ENCODE measurements at regions of chr19 and their contacts with region 1.

Region 1: GRCh38 chr19:39328046-39328705 is 7.5 kb upstream of the LRFN1 start:
- DNase-seq: peak; percentile 95
- ATAC-seq: peak; percentile 65
- H3K4me3 Mint-ChIP-seq: no peak overlapping the region
- H3K27ac Mint-ChIP-seq: no peak overlapping the region
- H3K4me1 Mint-ChIP-seq: peaks cover 11% of the 10 kb centered on the region
- H3K27me3 Mint-ChIP-seq: peaks cover 25% of the 10 kb centered on the region
- CTCF ChIP-seq: peak; percentile 99

Region 2: DNA sequence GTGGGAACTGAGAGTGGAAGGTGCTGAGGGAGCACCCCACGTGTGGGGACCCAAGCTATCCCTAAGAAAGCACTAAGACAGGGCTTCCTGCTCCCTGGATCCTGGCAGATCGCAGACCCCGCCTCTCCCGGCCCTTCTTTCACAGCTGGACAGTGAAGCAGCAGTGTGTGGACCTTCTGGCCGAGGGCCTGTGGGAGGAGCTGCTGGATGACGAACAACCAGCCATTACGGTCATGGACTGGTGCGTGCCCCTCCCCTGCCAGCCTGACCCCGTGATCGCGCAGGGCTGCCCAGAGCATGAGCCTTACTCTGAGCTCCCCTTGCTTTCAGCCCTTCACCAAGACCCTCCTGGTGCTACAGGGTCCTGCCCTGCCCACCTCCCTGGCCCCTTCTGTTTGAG is 129.2 kb before region 1 on chr19:
- CTCF ChIA-PET with region 1: interaction called, 12 read pairs
- POLR2A ChIA-PET with region 1: no interaction called
- DNase-seq: peak; percentile 42
- ATAC-seq: no peak
- H3K4me3 Mint-ChIP-seq: no peak overlapping the region
- H3K27ac Mint-ChIP-seq: no peak overlapping the region
- H3K4me1 Mint-ChIP-seq: peaks cover 22% of the 10 kb centered on the region
- H3K27me3 Mint-ChIP-seq: peaks cover 73% of the 10 kb centered on the region
- CTCF ChIP-seq: no peak

Region 3: DNA sequence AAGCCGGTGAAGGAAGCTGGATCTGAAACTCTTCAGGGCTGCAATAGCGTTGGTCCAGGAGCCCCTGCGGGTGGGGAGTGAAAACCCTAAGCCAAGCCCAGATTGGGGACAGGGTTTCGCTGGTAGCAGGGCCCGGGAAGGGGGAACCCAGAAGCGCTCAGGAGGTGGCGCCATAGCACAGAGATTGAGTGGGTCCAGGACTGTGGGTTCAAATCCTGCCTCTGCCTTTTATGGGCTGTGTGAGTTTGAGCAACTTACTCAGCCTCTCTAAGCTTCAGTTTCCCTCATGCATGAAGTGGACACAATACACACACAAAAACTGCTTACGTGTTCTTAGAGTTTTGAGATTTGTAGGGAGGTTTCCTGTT is 115.8 kb before region 1 on chr19:
- CTCF ChIA-PET with region 1: interaction called, 11 read pairs
- POLR2A ChIA-PET with region 1: no interaction called
- DNase-seq: peak; percentile 81
- ATAC-seq: peak; percentile 96
- H3K4me3 Mint-ChIP-seq: no peak overlapping the region
- H3K27ac Mint-ChIP-seq: no peak overlapping the region
- H3K4me1 Mint-ChIP-seq: no peaks in the 10 kb centered on the region
- H3K27me3 Mint-ChIP-seq: peaks cover 11% of the 10 kb centered on the region
- CTCF ChIP-seq: peak; percentile 18; the same call in 1 of the 2 replicates

Region 4: DNA sequence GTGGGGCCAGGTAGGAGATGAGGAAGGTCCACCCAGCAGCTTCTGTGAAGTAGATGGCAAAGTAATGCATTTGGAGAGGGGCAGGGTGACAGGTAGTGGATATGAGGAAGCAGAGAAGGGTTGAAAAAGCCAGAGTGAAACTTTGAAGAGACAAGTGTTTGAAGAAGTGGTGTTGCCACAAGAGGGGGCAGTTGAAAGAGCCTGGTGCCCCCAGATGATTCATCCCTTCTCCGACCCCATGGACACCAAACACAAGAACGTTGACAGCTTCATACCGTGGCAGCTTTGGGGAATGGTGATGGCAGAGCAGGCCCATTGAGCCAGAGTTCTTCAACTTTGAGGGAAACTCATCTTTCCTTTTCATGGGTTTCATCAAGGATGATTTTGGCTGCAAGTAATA is 103.3 kb before region 1 on chr19:
- CTCF ChIA-PET with region 1: interaction called, 10 read pairs
- POLR2A ChIA-PET with region 1: no interaction called
- DNase-seq: peak; percentile 26
- ATAC-seq: peak; percentile 39
- H3K4me3 Mint-ChIP-seq: no peak overlapping the region
- H3K27ac Mint-ChIP-seq: no peak overlapping the region
- H3K4me1 Mint-ChIP-seq: no peaks in the 10 kb centered on the region
- H3K27me3 Mint-ChIP-seq: peaks cover 41% of the 10 kb centered on the region
- CTCF ChIP-seq: no peak

Region 5: DNA sequence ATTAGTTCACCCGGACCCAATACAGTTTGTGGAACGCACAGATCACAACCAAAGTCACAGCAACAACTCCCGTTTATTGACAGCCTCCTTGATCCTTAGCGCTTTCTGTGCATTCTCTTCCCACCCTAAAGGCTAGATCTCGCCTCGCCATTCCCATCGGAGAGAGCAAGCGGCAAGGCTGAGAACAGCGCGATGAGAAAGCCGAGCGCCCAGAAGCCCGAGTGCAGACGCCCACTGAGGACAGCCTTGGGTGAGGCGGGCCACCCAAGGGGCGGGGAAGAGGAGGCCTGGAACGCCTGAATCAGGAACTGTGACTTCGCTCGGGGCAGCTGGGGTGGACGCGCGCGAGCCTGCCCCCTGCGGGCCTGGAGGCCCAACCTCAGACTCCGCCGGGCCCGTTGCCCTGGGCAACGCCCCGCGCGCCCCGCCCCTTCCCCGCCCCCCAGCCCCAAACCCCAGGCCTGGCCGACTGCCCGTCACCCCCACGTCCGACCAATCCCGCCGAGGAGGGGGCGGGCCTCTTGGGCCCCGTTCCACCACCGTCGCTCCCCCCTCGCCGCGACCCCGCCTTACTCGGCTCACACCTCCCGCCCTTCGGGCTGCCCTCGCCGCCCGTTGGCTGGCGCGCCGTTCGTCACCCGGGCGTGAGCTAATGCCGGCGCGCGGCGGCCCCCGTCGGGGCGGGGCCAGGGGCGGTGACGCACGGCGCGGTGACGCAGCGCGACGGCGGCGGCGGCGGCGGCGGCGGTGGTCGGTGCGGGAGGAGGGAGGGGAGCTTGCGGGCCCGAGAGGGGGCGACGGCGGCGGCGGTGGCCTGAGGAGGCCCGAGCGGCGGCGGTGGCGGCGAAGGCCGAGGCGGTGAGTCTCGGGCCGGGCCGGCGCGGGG is 13.8 kb after region 1 on chr19 and contains the start of gene SAMD4B:
- CTCF ChIA-PET with region 1: interaction called, 13 read pairs
- POLR2A ChIA-PET with region 1: no interaction called
- DNase-seq: peak; percentile 99
- ATAC-seq: peak; percentile 96
- H3K4me3 Mint-ChIP-seq: peak within 1 kb of the TSS; percentile 94
- H3K27ac Mint-ChIP-seq: peak within 1 kb of the TSS; percentile 87
- H3K4me1 Mint-ChIP-seq: peaks cover 24% of the 10 kb centered on the region
- H3K27me3 Mint-ChIP-seq: peaks cover 13% of the 10 kb centered on the region
- CTCF ChIP-seq: peak; percentile 41
- total RNA-seq, gene SAMD4B: 148 to 164 TPM (median 150 TPM) in 3 replicates

Measured in WTC11 (cell line).